HEK293 (cell line): ENCODE measurements at regions of chr9 and their contacts with region 1.

Region 1: GRCh38 chr9:132260846-132261245 is 93.9 kb downstream of the SETX start:
- H3K4me3 ChIP-seq: no peak overlapping the region
- H3K27ac ChIP-seq: no peak overlapping the region
- H3K4me1 ChIP-seq: no peaks in the 10 kb centered on the region
- CTCF ChIP-seq: no peak

Region 2: GRCh38 chr9:131762356-131762932 is 498.4 kb before region 1 on chr9:
- CTCF ChIA-PET with region 1: interaction called, 57 read pairs
- POLR2A ChIA-PET with region 1: no interaction called
- H3K4me3 ChIP-seq: no peak overlapping the region
- H3K27ac ChIP-seq: no peak overlapping the region
- H3K4me1 ChIP-seq: no peaks in the 10 kb centered on the region
- CTCF ChIP-seq: peak; percentile 99

Region 3: DNA sequence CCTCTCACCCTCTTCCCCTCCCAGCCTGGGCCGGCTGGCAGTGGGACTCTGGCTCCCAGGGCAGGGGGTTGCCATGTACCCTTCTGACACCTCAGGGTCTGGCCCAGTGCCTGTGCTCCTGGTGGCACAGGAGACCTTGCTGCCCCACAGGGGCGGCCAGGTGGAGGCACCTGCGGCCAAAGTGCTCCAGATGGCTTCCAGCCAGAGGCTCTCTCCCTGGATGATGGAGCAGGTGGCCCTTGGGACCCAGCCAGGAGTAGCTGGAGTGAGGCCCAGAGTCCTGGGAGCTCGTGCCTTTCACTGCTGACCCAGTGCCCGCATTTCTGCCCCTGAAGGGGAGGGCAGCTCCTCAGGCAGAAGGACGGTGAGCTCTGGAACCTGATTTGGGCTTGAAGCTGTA is 11.7 kb before region 1 on chr9:
- CTCF ChIA-PET with region 1: interaction called, 32 read pairs
- POLR2A ChIA-PET with region 1: no interaction called
- H3K4me3 ChIP-seq: no peak overlapping the region
- H3K27ac ChIP-seq: no peak overlapping the region
- H3K4me1 ChIP-seq: no peaks in the 10 kb centered on the region; the same call in 1 of the 2 replicates
- CTCF ChIP-seq: no peak

Region 4: DNA sequence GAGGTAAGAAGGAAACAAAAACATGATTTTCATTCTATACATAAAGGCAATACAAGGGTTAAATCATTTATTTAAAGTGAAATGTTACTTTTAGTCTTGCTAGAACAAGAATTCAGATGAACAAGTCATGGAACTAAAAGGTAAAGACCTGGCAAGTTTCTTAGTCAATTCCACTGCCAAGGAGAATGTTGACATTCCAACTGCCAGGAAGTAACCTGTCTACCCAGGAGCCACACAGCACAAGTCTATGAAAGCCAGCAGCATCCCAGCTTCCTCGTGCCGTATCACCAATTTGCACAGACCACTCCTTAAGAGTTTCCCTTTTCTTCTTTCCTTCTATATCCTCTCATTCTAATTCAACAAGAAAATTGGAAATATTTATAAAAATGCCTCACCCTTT is 14.0 kb after region 1 on chr9:
- CTCF ChIA-PET with region 1: interaction called, 46 read pairs
- POLR2A ChIA-PET with region 1: interaction called, 8 read pairs
- H3K4me3 ChIP-seq: no peak overlapping the region
- H3K27ac ChIP-seq: no peak overlapping the region
- H3K4me1 ChIP-seq: no peaks in the 10 kb centered on the region
- CTCF ChIP-seq: no peak

Region 5: GRCh38 chr9:132312873-132313272 is 52.0 kb after region 1 on chr9:
- CTCF ChIA-PET with region 1: interaction called, 10 read pairs
- POLR2A ChIA-PET with region 1: no interaction called
- H3K4me3 ChIP-seq: no peak overlapping the region
- H3K27ac ChIP-seq: no peak overlapping the region
- H3K4me1 ChIP-seq: no peaks in the 10 kb centered on the region
- CTCF ChIP-seq: no peak